AG04449 (cell line): ENCODE measurements at regions of chr1 and their contacts with region 1.

Region 1: DNA sequence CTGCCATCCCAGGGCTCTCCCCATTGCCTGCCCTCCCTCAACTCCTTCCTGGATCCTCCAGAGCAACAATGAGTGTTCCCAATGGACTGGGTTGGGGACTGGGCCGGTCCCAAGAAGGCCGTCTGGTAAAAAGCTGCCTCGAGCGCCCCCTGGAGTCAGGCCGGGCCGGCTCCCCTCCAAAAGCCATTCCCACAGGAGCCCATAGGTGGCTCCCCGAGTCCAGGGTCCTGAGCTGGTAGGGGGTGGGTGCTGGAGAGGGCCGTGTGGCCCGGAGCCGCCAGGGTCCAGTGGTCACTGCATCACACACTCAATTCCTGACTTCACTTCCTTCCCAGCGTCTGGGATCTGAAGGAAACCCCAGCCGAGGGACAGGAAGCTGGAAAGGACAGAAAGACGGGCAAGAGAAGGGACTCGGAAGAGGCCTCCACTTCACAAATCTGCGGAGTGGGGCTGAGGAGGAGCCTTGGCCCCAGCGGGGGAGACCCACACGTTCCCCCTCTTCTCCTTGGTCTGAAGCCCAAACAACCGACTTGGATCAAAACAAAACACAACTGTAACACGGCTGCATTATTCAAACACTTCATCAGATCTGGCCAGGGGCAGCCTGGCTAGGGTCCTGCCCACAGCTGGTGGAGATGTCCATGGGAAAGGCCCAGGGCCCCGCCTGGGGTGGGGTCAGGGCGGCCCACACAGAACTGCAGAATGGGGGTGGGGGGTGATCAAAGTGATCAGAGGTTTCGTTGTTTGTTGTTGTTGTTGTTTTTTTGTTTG is 10.9 kb upstream of the ALDH4A1 start:
- DNase-seq: no peak
- H3K4me3 ChIP-seq: no peak overlapping the region
- CTCF ChIP-seq: peak; percentile 100

Region 2: GRCh38 chr1:18902523-18903290 is 10.5 kb before region 1 on chr1 and contains the start of gene ALDH4A1:
- CTCF ChIA-PET with region 1: interaction called, 115 read pairs
- POLR2A ChIA-PET with region 1: no interaction called
- DNase-seq: peak; percentile 86
- H3K4me3 ChIP-seq: peak within 1 kb of the TSS; percentile 83
- CTCF ChIP-seq: no peak

Region 3: DNA sequence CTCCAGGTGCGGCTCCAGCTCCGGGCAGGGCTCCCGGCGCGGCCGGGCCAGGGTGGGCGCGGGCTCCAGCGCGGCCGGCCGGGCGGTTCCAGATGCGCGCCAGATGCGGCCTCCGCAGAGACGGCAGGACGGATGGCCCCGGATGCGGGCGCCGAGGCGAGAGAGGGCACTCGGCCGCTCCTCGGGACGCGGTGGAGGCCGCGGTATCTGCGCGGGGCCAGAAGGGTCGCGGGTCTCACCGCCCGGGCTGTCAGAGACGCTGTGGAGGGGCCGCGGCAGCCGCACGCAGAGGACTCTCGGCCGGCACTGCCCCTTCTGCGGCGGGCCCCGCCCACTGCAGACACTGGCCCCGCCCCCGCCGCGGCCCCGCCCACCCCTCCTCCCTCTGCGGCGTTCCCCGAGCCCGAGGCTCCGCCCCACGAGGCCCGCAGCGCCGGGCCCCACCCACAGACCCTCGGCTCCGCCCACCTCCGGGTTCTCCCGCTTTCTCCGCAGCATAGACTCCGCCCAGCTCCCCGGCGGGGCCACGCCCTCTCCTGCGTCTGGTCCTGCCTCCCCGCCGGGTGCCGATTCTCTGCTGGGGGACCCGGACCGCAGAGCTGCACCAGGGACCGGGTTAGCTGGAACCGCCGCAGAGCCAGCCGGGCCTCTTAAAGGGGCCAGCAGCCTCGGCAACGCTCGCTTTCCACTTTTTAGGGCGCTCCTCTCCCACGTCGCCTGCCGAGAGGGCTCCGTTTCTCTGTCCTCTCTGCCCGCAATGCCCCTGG is 43.3 kb after region 1 on chr1 and contains the start of gene IFFO2:
- CTCF ChIA-PET with region 1: interaction called, 179 read pairs
- POLR2A ChIA-PET with region 1: interaction called, 3 read pairs
- DNase-seq: no peak
- H3K4me3 ChIP-seq: peak within 1 kb of the TSS; percentile 75
- CTCF ChIP-seq: no peak

Region 4: GRCh38 chr1:19000065-19000464 is 86.8 kb after region 1 on chr1:
- CTCF ChIA-PET with region 1: interaction called, 11 read pairs
- POLR2A ChIA-PET with region 1: no interaction called
- DNase-seq: no peak
- H3K4me3 ChIP-seq: no peak overlapping the region
- CTCF ChIP-seq: no peak

Region 5: DNA sequence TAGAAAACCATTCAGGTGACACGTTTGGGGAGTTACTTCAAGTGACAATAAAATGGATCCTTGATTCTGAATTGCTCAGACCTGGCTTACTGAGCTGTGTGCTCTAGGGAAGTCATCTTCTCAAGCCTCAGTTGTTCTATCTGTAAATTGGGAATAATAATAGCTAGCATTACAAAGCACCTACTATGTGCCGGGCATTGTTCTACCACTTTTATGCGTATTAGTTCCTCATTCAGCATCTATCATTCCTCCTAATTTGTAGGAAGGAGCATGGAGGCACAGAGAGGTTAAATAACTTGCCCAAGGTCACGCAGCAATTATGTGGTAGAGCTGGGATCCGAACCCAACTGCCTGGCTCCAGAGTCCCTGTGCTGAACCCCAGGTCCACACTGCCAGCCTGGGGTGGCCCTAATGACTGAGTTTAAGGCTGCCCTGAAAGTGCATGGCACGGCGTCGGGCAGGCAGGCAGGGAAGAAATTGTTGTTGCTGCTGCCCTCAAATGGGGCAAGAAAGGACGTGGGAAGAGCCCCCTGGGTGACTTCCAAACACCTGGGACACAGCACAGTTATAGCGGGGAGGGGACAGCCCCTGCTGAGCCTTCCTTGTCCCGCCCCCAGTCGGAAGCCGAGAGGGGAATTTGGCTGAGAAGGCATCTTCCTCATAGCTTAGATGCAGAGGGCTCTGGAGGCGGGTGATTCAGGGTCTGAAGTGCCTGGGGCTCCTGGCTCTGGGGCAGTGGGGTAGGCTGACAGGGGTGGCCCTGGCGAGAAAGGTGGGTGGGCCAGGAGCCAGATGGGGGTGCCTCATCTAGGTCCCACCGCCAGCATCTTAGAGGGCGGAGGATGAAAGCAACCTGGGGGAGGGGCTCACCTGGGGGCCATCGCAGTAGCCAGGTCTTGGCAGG is 129.7 kb after region 1 on chr1:
- CTCF ChIA-PET with region 1: interaction called, 12 read pairs
- POLR2A ChIA-PET with region 1: no interaction called
- DNase-seq: no peak
- H3K4me3 ChIP-seq: no peak overlapping the region
- CTCF ChIP-seq: no peak

Region 6: DNA sequence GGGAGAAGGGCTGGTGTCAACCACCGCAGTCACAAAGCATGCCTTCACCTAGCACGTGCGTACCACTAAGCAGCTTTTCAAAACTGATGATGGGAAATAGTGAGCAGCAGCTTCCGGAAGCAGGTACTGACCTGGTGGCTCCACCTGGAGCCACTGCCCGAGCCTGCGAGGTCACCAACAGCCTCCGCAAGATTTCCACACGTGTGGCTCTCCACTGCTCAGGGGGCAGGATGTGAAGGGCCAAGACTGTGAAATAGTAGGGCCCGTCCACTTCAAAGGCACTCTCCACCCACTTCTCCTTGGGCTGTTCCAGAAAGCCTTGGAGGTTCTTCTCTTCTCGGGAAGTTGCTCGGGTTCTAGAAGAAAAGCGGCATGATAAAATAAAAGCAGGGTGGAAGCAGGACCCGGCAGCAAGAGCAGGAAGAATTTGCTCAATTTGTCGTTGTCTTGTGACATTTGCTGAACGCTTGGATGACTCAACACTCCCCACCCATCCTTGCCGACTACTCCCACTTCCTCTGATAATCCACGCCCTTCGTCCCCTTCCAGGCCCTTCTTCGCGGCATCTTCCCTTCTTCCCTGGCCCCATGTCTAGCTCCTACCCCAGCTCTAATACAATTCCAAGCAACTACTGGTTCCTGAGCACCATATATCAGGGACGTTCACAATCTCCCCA is 168.1 kb after region 1 on chr1:
- CTCF ChIA-PET with region 1: interaction called, 86 read pairs
- POLR2A ChIA-PET with region 1: no interaction called
- DNase-seq: no peak
- H3K4me3 ChIP-seq: no peak overlapping the region
- CTCF ChIP-seq: no peak

Region 7: DNA sequence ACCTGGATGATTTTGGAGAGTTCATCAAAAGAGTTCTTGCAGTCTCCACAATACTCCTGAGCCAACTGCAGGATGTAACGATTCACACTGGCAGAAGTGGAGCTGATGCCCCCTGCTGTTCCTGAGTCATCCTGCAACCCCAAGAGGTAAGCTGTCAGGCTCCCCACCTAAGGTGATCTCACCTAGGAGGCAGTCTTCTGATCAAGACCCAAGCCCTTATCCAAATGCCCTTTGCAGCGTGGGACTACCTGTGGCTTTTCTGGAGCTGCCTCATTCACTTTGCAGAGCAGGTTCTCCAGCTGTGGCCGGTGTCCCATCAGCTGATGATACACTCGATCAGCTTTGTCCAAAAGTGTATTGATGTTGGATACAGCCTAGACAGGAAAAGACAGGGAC is 200.4 kb after region 1 on chr1:
- CTCF ChIA-PET with region 1: interaction called, 54 read pairs
- POLR2A ChIA-PET with region 1: no interaction called
- DNase-seq: no peak
- H3K4me3 ChIP-seq: no peak overlapping the region
- CTCF ChIP-seq: peak; percentile 64